Activated CD8-positive, alpha-beta T cell treated with anti-CD3 and anti-CD28 coated beads, Interleukin-2, amount 10 ng/mL, durations not matched to agents 7 days and 5 days (primary cell): ENCODE measurements at regions of chr17 and their contacts with region 1.

Region 1: DNA sequence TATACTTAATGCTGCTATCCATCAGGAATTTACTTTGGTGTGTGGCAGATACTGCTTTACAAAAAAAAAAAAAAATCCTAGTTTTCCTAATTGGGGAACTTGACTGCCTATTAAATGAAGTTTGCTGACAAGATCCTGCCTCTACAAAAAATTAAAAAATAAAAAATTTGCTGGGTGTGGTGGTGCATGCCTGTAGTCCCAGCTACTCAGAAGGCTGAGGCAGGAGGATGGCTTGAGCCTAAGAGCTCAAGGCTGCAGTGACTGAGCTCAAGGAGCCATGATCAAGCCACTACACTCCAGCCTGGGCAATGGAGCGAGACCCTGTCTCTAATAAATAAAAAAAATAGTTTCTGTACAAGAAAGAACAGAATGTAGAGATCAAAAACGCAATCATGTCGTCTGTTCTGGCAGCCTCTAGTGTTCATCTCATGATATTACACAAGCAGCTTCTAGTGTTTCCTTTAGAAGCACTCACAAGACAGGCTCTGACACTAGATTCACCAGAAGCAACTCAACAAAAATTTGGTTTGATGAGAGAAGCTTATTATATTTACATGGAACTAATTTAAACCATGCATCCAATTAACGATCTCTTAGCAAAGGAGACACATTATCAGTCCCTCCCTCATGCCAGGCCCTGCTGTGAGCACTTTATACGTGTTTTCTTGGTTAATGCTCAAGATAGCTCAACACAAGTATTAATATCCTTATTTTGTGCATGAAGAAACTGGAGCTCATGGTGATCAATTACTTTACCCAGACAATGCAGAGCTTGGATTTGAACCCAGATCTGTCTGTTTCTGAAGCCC is 6.8 kb upstream of the KRTAP17-1 start:
- DNase-seq: no peak
- ATAC-seq: peak; percentile 73
- H3K4me3 Mint-ChIP-seq: no peak overlapping the region
- H3K27ac Mint-ChIP-seq: no peak overlapping the region
- H3K4me1 Mint-ChIP-seq: peaks cover 9% of the 10 kb centered on the region
- H3K27me3 Mint-ChIP-seq: no peaks in the 10 kb centered on the region

Region 2: DNA sequence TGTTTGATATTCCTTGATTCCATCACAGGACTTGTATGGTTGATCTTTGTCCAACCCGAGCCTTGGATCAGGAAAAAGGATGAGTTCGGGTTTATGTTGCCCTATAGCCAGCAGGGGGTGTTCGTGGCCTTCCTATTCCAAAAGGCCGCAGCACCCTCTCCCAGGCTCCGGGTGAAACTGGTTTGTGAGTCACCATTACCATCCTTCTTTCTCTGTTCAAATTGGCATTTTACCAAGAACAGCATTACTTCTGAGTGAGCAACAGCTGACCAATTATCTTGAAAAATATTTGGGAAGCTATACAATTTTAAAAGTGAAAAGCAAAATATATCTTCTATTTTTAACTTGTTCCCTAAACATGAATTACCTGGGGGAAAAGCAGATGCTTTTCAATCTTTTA is 412.9 kb before region 1 on chr17:
- CTCF ChIA-PET with region 1: interaction called, 15 read pairs
- POLR2A ChIA-PET with region 1: no interaction called
- DNase-seq: peak; percentile 71
- ATAC-seq: peak; percentile 82
- H3K4me3 Mint-ChIP-seq: no peak overlapping the region
- H3K27ac Mint-ChIP-seq: no peak overlapping the region
- H3K4me1 Mint-ChIP-seq: no peaks in the 10 kb centered on the region
- H3K27me3 Mint-ChIP-seq: peaks cover 24% of the 10 kb centered on the region

Region 3: DNA sequence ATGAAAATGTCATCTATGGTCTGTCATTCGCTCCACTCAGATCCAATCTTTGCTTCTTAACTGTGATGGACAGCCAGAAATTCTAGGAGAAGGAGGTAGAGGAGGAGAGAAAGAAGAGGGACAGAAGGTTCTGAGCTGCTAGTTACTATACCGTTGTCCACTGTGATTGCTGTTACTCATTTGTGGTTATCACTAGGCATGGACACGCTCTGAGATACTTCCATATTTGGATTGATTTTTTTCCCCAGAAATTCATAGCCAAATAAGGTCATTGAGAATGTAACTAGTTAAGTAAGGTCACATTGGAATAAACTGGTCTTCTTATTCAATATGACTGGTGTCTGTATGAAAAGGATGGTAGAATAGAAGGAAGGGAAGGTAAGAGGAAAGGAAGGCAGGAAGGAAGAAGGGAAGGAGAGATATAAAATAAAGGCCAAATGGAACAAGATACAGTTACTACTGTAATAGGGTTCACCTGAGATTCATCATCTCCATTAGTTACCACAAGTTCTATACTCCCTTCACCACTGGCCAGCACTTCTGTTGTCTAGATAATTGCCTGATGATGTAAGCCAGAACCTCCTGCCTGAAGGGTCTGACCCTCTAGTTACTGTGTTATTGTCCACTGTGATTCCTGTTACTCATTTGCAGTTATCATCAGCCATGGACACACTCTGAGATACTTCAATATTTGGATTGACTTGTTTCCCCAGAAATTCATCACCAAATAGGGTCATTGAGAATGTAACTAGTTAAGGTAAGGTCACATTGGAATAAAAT is 43.9 kb before region 1 on chr17:
- CTCF ChIA-PET with region 1: no interaction called
- POLR2A ChIA-PET with region 1: no interaction called
- DNase-seq: no peak
- ATAC-seq: no peak
- H3K4me3 Mint-ChIP-seq: no peak overlapping the region
- H3K27ac Mint-ChIP-seq: no peak overlapping the region
- H3K4me1 Mint-ChIP-seq: no peaks in the 10 kb centered on the region
- H3K27me3 Mint-ChIP-seq: peaks cover 5% of the 10 kb centered on the region

Region 4: DNA sequence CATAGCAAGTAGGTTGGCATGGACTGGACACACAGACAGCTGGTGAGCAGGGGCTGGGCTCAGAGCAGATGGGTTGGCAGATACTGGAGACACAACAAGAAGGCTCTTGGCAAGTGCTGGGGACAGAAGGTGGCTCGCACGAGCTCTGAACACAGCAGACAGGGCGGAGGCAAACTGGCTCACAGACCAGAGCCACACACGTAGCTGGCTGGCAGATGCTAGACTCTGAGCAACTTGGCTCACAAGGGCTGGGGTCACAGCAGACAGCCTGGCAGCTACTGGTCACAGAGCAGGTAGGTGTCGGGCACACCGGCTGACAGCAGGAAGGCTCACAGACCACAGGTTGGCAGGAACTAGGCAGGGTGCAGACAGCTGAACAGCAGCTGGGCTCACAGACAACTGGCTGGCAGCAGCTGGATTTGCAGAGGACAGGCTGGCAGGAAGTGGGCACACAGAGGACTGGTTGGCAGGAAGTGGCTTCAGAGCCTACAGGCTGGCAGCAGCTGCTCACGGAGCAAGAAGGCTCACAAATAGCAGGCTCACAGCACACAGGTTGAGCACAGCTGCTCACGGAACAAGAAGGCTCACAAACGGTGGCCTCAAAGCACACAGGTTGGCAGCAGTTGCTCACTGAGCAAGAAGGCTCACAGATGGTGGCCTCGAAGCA is 13.9 kb before region 1 on chr17:
- CTCF ChIA-PET with region 1: interaction called, 19 read pairs
- POLR2A ChIA-PET with region 1: no interaction called
- DNase-seq: peak; percentile 74
- ATAC-seq: peak; percentile 79
- H3K4me3 Mint-ChIP-seq: peak overlapping the region; percentile 48
- H3K27ac Mint-ChIP-seq: peak overlapping the region; percentile 90
- H3K4me1 Mint-ChIP-seq: peaks cover 42% of the 10 kb centered on the region
- H3K27me3 Mint-ChIP-seq: no peaks in the 10 kb centered on the region

Region 5: GRCh38 chr17:41338961-41339485 is 16.7 kb after region 1 on chr17:
- CTCF ChIA-PET with region 1: interaction called, 26 read pairs
- POLR2A ChIA-PET with region 1: no interaction called
- DNase-seq: peak; percentile 32
- ATAC-seq: peak; percentile 35
- H3K4me3 Mint-ChIP-seq: peak overlapping the region; percentile 7
- H3K27ac Mint-ChIP-seq: no peak overlapping the region
- H3K4me1 Mint-ChIP-seq: peaks cover 48% of the 10 kb centered on the region
- H3K27me3 Mint-ChIP-seq: peaks cover 2% of the 10 kb centered on the region